ENCODE measurements at regions of chr4 and their contacts with region 1.

Region 1: DNA sequence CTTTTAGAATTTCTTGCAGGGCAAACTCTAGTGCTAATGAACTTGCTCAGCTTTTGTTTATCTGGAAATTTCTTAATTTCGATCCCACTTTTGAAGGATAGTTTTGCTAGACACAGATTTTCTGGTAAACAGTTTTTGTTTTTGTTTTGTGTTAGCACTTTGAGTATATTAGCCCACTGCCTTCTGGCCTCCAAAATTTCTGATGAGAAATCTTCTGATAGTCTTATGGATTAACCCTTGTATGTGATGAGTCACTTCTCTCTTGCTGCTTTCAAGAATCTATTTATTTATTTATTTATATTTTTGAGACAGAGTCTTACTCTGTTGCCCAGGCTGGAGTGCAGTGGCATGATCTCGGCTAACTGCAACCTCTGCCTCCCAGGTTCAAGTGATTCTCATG is 27.0 kb upstream of the GIMD1 start:
- DNase-seq: no peak

Region 2: DNA sequence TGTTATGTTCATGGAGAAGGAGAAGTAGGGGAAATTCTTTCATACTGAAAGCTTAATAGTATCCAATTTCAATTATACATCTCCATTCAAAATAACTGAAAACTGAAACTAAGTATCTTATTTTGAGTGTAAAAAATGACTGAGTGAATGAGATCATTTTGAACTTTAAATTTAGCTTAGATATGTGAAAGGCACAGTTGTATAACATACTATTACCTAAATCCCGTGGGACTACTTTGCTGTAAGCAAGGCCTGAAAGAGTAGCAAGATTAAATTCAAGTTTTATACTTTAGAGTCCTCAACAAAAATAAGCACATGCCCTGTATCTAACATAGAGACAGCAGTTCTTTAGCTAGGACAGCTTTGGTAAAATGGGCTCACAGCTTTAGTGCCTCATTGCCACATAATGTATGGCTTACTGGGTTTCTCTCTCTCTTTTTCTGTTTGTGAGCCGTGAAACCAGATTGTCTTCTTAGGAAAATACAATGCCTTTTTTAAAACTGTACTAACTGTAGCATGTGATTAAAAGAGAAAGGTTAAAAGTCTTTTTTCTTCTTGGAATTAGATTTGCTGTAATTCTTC is 643.8 kb before region 1 on chr4:
- intact Hi-C with region 1: loop called in 1 of 2 experiments (anchors 5 kb)
- DNase-seq: no peak

Region 3: DNA sequence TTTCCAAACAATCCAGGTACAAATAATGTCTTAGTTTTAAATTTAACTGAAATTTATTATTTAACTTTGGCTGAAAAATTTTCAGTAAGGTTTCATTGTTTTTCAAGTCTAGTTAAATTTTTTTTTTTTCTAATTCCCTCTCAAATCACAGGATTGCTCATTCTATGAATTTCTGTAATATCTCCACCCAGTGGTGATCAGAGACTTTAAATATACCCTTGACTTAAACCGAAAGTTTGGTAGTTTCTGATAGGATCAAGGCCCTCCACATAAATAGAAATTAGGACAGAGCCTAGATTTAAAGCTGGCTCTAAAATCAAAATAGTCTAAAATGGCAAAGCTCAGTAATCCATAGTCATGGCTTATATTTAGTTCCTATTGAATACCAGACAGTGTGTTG is 255.0 kb before region 1 on chr4:
- intact Hi-C with region 1: no loop called
- DNase-seq: no peak